Naive thymus-derived CD4-positive, alpha-beta T cell (primary cell): ENCODE measurements at regions of chr12 and their contacts with region 1.

Region 1: DNA sequence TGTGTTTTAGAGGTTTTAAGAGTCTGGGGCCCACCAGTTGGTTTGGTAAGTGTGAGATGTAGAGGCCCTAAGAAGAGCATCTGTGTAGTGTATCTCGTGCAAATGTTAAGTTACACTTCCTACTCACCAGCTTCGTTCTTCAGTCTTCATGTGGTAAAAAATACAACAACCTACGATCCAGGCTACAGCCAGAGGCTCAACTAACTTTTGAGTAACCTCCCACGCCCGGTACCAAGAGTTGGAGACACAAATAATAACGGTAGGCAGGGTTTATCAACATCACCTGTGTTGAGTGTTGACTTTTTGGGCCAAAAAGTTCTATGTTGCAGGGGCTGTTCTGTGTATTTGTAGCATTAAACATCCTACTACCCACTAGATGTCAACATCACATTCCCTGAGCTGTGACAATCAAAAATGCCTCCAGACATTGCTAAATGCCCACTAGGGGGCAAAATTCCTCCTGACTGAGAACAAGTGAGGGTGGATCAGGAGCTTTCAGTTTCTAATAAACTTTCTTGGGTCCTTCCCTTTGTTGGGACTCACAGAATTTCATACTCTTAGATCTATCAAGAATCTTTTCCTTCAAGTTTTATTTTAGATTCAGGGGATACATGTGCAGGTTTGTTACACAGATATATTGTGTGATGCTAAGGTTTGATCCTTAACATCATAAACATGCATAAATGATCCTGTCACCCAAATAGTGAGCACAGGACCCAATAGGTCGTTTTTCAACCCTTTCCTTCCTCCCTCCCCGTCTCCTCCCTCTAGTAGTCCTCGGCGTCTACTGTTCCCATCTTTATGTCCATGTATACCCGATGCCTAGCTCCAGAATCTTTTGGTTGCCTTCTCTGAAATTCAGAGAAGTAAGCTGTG is 94.7 kb downstream of the SLC2A13 start:
- DNase-seq: peak in 8 of 9 donors; percentile 30 to 70 (median 64)
- ATAC-seq: peak; percentile 94
- H3K4me3 ChIP-seq: peak overlapping the region; percentile 5
- H3K4me3 Mint-ChIP-seq: peak overlapping the region; percentile 6 to 83 (median 71)
- H3K27ac ChIP-seq: no peak overlapping the region
- H3K27ac Mint-ChIP-seq: peak overlapping the region in 3 of 9 donors; percentile 19 to 82 (median 41)
- H3K4me1 ChIP-seq: no peaks in the 10 kb centered on the region
- H3K4me1 Mint-ChIP-seq: peaks cover 5 to 19% (median 9%) of the 10 kb centered on the region in 7 donors
- H3K27me3 ChIP-seq: no peaks in the 10 kb centered on the region
- H3K27me3 Mint-ChIP-seq: no peaks in the 10 kb centered on the region

Region 2: DNA sequence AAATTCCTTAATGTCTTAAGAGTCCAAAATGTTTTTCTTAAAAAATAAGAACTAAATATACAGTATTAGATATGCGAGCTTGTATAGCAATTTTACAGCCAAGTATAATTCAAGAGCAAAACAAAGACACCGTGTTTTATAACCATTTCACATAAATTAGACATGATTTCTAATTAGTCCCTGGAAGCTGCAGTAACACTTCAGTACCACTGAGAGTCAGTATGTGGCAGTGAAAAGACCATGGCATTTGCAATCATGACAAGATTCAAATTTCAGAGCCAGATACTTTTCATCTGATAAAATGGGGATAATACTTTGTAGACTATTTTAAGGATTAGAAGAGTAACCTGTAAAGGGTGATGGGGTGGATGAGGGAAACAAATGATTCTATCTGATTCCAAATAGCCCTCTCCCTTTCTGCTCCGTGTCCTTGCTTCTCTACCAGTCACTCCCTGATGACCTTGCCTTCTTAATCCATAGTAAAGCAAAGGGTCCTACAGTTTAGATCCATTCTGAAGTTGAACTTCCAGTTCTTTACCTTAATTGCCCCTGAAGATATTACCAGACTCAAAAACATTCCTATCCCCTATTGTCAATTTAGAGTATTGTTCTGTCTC is 246.1 kb before region 1 on chr12:
- CTCF ChIA-PET with region 1: no interaction called
- POLR2A ChIA-PET with region 1: no interaction called
- intact Hi-C with region 1: loop called in 1 of 2 experiments (anchors 10 kb)
- DNase-seq: peak in 4 of 9 donors; percentile 2 to 22 (median 8)
- ATAC-seq: peak; percentile 51
- H3K4me3 ChIP-seq: no peak overlapping the region
- H3K4me3 Mint-ChIP-seq: no peak overlapping the region
- H3K27ac ChIP-seq: no peak overlapping the region
- H3K27ac Mint-ChIP-seq: no peak overlapping the region
- H3K4me1 ChIP-seq: no peaks in the 10 kb centered on the region
- H3K4me1 Mint-ChIP-seq: no peaks in the 10 kb centered on the region
- H3K27me3 ChIP-seq: no peaks in the 10 kb centered on the region
- H3K27me3 Mint-ChIP-seq: no peaks in the 10 kb centered on the region

Region 3: GRCh38 chr12:40312982-40313576 is 301.9 kb after region 1 on chr12:
- CTCF ChIA-PET with region 1: no interaction called
- POLR2A ChIA-PET with region 1: no interaction called
- intact Hi-C with region 1: loop called in 1 of 2 experiments (anchors 1 kb)
- DNase-seq: no peak
- ATAC-seq: no peak
- H3K4me3 ChIP-seq: no peak overlapping the region
- H3K4me3 Mint-ChIP-seq: no peak overlapping the region
- H3K27ac ChIP-seq: no peak overlapping the region
- H3K27ac Mint-ChIP-seq: no peak overlapping the region
- H3K4me1 ChIP-seq: no peaks in the 10 kb centered on the region
- H3K4me1 Mint-ChIP-seq: no peaks in the 10 kb centered on the region
- H3K27me3 ChIP-seq: no peaks in the 10 kb centered on the region
- H3K27me3 Mint-ChIP-seq: no peaks in the 10 kb centered on the region